HCT116 (cell line): ENCODE measurements at regions of chr2 and their contacts with region 1.

Region 1: DNA sequence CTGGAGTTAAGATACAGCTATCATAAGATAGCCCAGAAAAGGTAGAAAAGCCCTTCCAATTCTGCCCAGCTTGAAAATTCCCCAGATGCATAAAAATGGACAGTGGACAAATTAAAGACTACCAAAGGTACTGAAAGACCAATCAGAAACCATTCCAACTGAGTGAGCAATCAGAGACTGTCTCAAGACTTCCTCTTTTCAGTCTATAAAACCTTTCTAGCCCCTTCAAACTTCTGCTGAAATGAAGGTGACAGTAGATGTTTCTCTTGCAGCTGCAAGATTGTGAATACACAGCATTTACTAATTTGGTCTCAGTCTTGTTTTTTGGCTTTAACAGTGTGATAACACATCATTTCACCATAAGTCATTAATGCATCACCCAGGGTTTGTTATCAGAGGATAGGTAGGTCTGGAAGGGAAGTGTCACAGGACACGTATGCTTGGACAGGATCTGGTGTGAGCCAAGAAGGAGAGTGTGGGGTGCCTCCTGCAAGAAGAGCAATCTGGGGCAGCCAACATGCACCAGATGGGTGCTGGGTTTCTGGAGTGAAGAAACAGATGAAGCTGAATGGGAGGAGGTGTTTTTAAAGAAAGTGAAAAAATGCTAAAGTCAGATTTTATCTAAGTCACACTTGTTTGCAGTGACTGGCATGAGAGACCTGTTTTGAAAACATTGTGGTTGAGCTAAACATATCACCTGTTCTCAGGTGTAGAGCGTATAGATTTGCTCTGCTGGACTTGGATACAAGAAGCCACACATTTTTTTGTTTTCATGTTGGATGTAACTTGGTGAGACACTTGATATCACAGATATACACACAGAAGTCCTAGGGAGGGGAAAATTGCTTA is 75.3 kb upstream of the DDX18 start:
- DNase-seq: no peak
- ATAC-seq: no peak
- H3K4me3 ChIP-seq: no peak overlapping the region
- H3K27ac ChIP-seq: no peak overlapping the region
- H3K4me1 ChIP-seq: no peaks in the 10 kb centered on the region
- H3K27me3 ChIP-seq: no peaks in the 10 kb centered on the region
- CTCF ChIP-seq: no peak
- POLR2A ChIP-seq: no peak
- RAD21 ChIP-seq: no peak

Region 2: DNA sequence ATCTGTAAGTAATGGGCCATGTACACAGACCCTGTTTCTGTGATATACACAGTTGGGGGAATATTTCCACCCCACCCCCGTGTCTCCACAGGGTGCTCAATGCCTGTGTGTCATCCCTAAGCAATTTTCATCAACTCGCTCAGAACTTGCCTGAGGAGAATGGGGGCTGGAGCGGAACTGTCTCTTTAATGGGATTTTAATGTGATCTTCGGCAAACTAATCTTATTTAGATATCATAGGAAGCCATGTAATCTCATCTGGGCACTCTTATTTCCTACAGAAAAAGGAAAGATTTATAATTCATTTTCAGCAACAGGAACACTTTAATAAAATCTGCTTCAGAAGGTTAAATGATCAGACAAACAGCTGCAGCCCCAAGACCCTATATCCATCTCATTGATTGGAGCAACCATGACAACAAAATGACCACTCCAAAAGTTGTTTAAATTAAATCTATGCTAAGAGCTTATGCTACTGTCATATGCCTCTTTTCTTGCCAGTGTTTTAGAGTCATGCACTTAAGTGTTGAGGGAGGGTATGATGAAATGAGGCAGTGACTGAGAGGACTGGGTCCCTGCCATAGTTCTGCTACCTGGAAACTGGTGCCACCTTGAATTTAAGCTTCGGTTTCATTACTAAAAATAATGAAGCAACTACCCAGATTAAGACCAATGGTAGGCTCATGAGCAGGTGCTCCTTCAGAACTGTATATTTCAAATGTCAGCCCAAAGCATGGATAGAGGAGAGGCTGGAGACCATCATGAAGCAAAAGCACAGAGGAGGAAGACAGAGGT is 107.9 kb before region 1 on chr2:
- CTCF ChIA-PET with region 1: no interaction called
- POLR2A ChIA-PET with region 1: no interaction called
- RAD21 ChIA-PET with region 1: no interaction called
- intact Hi-C with region 1: no loop called
- DNase-seq: no peak
- ATAC-seq: no peak
- H3K4me3 ChIP-seq: no peak overlapping the region
- H3K27ac ChIP-seq: no peak overlapping the region
- H3K4me1 ChIP-seq: no peaks in the 10 kb centered on the region
- H3K27me3 ChIP-seq: no peaks in the 10 kb centered on the region
- CTCF ChIP-seq: no peak
- POLR2A ChIP-seq: no peak
- RAD21 ChIP-seq: no peak

Region 3: GRCh38 chr2:117698287-117698686 is 40.9 kb before region 1 on chr2:
- CTCF ChIA-PET with region 1: no interaction called
- POLR2A ChIA-PET with region 1: no interaction called
- RAD21 ChIA-PET with region 1: no interaction called
- intact Hi-C with region 1: loop called (anchors 1 kb)
- DNase-seq: no peak
- ATAC-seq: no peak
- H3K4me3 ChIP-seq: no peak overlapping the region
- H3K27ac ChIP-seq: no peak overlapping the region
- H3K4me1 ChIP-seq: no peaks in the 10 kb centered on the region
- H3K27me3 ChIP-seq: no peaks in the 10 kb centered on the region; the same call in 1 of the 2 replicates
- CTCF ChIP-seq: no peak
- POLR2A ChIP-seq: no peak
- RAD21 ChIP-seq: no peak